ENCODE measurements at regions of chr2 and their contacts with region 1.

Region 1: GRCh38 chr2:11688222-11689069 is 18.5 kb upstream of the NTSR2 start:
- DNase-seq: peak in 8 of 10 donors; percentile 57 to 92 (median 76)

Region 2: GRCh38 chr2:11743846-11744553 is 55.6 kb after region 1 on chr2:
- intact Hi-C with region 1: loop called (anchors 10 kb)
- DNase-seq: peak; percentile 74 to 98 (median 84)

Measured in posterior cingulate gyrus (tissue), 11 donors.